ENCODE measurements at regions of chr15 and their contacts with region 1.

Region 1: DNA sequence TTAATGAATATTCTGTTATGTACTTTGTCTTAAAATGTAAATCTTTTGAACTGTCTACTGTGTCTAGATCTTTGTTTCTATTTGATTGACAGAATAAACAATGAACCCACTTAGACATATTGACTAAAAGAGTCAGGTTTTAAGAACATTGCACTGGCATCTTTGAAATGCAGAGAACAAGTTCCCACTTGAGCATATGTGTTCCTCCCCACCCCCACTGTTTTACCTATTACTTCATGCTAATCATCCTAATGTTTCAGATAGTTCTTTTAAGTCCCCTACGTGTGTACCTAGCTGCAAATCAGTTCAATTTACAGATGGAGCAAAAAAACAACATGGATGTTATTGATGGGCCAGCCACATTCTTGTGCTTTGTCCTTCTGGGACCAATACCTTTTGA is 11.7 kb upstream of the TCF12 start:
- DNase-seq: no peak

Region 2: GRCh38 chr15:56821721-56822425 is 84.9 kb before region 1 on chr15:
- intact Hi-C with region 1: no loop called
- DNase-seq: no peak

Region 3: GRCh38 chr15:56931639-56932508 is 25.1 kb after region 1 on chr15:
- intact Hi-C with region 1: loop called in 1 of 2 experiments (anchors 2 kb)
- DNase-seq: no peak